ENCODE measurements at regions of chr5 and their contacts with region 1.

Region 1: GRCh38 chr5:146520731-146521130 is 4.7 kb upstream of the GPR151 start:
- DNase-seq: no peak
- H3K4me3 ChIP-seq: no peak overlapping the region
- H3K27ac ChIP-seq: no peak overlapping the region
- H3K4me1 ChIP-seq: no peaks in the 10 kb centered on the region
- H3K27me3 ChIP-seq: no peaks in the 10 kb centered on the region
- CTCF ChIP-seq: no peak
- POLR2A ChIP-seq: no peak

Region 2: GRCh38 chr5:146490089-146490843 is 30.5 kb before region 1 on chr5:
- intact Hi-C with region 1: loop called (anchors 2 kb)
- DNase-seq: no peak
- H3K4me3 ChIP-seq: no peak overlapping the region
- H3K27ac ChIP-seq: no peak overlapping the region
- H3K4me1 ChIP-seq: no peaks in the 10 kb centered on the region
- H3K27me3 ChIP-seq: no peaks in the 10 kb centered on the region
- CTCF ChIP-seq: no peak
- POLR2A ChIP-seq: no peak

Region 3: GRCh38 chr5:146560205-146560812 is 39.6 kb after region 1 on chr5:
- intact Hi-C with region 1: no loop called
- DNase-seq: no peak
- H3K4me3 ChIP-seq: no peak overlapping the region
- H3K27ac ChIP-seq: no peak overlapping the region
- H3K4me1 ChIP-seq: peaks cover 4% of the 10 kb centered on the region
- H3K27me3 ChIP-seq: no peaks in the 10 kb centered on the region
- CTCF ChIP-seq: no peak
- POLR2A ChIP-seq: no peak

Region 4: DNA sequence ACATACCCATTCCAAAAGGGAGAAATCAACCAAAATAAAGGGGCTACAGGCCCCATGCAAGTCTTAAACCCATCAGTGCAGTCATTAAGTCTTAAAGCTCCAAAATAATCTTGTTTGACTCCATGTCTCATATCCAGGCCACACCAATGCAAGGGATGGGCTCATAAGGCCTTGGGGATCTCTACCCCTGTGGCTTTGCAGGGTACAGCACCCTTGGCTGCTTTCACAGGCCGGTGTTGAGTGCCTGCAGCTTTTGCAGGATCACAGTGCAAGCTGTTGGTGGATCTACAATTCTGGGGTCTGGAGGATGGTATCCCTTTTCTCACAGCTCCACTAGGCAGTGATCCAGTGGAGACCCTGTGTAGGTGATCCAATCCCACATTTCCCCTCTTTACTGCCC is 1642.6 kb after region 1 on chr5:
- intact Hi-C with region 1: no loop called
- DNase-seq: no peak
- H3K4me3 ChIP-seq: no peak overlapping the region
- H3K27ac ChIP-seq: no peak overlapping the region
- H3K4me1 ChIP-seq: no peaks in the 10 kb centered on the region
- H3K27me3 ChIP-seq: no peaks in the 10 kb centered on the region
- CTCF ChIP-seq: no peak
- POLR2A ChIP-seq: no peak

Measured in vagina (tissue), 2 donors.